Endothelial cell of umbilical vein (primary cell): ENCODE measurements at regions of chr9 and their contacts with region 1.

Region 1: GRCh38 chr9:81689343-81690190 is at the start of gene TLE1:
- DNase-seq: peak; percentile 100
- H3K4me3 ChIP-seq: peak within 1 kb of the TSS; percentile 78 to 96 (median 88)
- H3K27ac ChIP-seq: peak within 1 kb of the TSS; percentile 67
- H3K4me1 ChIP-seq: peaks cover 28% of the 10 kb centered on the region
- H3K27me3 ChIP-seq: peaks cover 3 to 5% of the 10 kb centered on the region in 2 experiments
- CTCF ChIP-seq: no peak
- POLR2A ChIP-seq: peak; percentile 31
- total RNA-seq, gene TLE1: 58.2 and 60.8 TPM in 2 replicates

Region 2: DNA sequence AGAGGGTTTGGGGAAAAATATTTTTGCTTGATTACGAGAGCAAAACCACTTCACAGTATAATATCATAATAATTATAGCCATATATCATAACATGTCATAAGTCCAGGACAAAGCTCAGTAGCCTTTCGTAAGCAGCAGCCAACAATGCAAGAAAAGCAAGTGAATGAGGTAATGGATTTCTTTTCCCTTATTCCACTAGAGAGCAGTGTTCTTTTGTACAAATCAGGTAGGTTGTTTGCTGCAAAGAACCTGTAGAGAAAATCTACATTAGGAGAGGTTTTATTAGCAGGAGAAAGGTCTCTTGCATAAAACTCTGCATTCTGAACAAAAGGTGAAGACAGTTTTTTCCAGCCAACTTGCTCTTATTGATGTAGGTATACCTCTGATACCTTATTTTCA is 1084.4 kb before region 1 on chr9:
- CTCF ChIA-PET with region 1: no interaction called
- POLR2A ChIA-PET with region 1: no interaction called
- dilution Hi-C with region 1: no loop called
- intact Hi-C with region 1: loop called (anchors 10 kb)
- DNase-seq: peak; percentile 2
- H3K4me3 ChIP-seq: no peak overlapping the region
- H3K27ac ChIP-seq: no peak overlapping the region
- H3K4me1 ChIP-seq: no peaks in the 10 kb centered on the region
- H3K27me3 ChIP-seq: no peaks in the 10 kb centered on the region
- CTCF ChIP-seq: no peak
- POLR2A ChIP-seq: no peak

Region 3: GRCh38 chr9:81389569-81389993 is 300.0 kb before region 1 on chr9:
- CTCF ChIA-PET with region 1: no interaction called
- POLR2A ChIA-PET with region 1: no interaction called
- dilution Hi-C with region 1: no loop called
- intact Hi-C with region 1: loop called (anchors 1 kb)
- DNase-seq: peak; percentile 98
- H3K4me3 ChIP-seq: no peak overlapping the region
- H3K27ac ChIP-seq: peak overlapping the region; percentile 100
- H3K4me1 ChIP-seq: peaks cover 31% of the 10 kb centered on the region
- H3K27me3 ChIP-seq: no peaks in the 10 kb centered on the region
- CTCF ChIP-seq: no peak
- POLR2A ChIP-seq: peak; percentile 60

Region 4: GRCh38 chr9:81540142-81540710 is 149.3 kb before region 1 on chr9:
- CTCF ChIA-PET with region 1: no interaction called
- POLR2A ChIA-PET with region 1: no interaction called
- dilution Hi-C with region 1: no loop called
- intact Hi-C with region 1: loop called (anchors 5 kb)
- DNase-seq: no peak
- H3K4me3 ChIP-seq: no peak overlapping the region
- H3K27ac ChIP-seq: no peak overlapping the region
- H3K4me1 ChIP-seq: peaks cover 8% of the 10 kb centered on the region
- H3K27me3 ChIP-seq: no peaks in the 10 kb centered on the region
- CTCF ChIP-seq: no peak
- POLR2A ChIP-seq: no peak

Region 5: DNA sequence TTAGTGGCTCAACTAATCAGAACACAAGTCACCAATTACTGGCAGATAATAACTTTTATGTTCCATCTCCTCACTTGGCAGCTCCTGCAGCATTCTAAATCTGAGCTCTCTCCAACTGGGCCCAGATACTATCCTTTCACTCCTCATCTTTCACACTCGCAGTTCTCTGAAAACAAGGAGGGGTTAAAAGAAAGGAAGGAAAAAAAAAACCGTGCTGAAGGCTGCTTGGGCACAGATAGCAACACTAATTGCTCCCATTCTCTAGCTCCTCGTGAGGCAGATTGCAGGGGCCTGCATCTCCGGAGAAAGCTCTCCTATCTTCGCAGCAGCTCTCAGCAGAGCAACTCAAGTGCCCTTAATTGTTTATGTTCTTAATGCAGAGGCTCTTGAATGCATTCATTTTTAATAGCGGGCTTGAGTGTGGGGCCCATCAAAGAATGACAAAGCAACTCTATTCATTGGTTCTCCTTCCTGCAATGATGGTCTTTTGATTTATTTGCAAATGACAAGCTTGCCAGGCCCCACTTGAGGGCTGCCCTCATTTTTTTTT is 24.2 kb before region 1 on chr9:
- CTCF ChIA-PET with region 1: no interaction called
- POLR2A ChIA-PET with region 1: no interaction called
- dilution Hi-C with region 1: no loop called
- intact Hi-C with region 1: no loop called
- DNase-seq: no peak
- H3K4me3 ChIP-seq: no peak overlapping the region
- H3K27ac ChIP-seq: no peak overlapping the region
- H3K4me1 ChIP-seq: no peaks in the 10 kb centered on the region
- H3K27me3 ChIP-seq: no peaks in the 10 kb centered on the region
- CTCF ChIP-seq: no peak
- POLR2A ChIP-seq: no peak

Region 6: GRCh38 chr9:81724242-81724889 is 34.8 kb after region 1 on chr9:
- CTCF ChIA-PET with region 1: interaction called, 4 read pairs
- POLR2A ChIA-PET with region 1: no interaction called
- dilution Hi-C with region 1: no loop called
- intact Hi-C with region 1: loop called (anchors 2 kb)
- DNase-seq: peak; percentile 89
- H3K4me3 ChIP-seq: no peak overlapping the region
- H3K27ac ChIP-seq: peak overlapping the region; percentile 21
- H3K4me1 ChIP-seq: peaks cover 8% of the 10 kb centered on the region
- H3K27me3 ChIP-seq: no peaks in the 10 kb centered on the region
- CTCF ChIP-seq: no peak
- POLR2A ChIP-seq: no peak

Region 7: DNA sequence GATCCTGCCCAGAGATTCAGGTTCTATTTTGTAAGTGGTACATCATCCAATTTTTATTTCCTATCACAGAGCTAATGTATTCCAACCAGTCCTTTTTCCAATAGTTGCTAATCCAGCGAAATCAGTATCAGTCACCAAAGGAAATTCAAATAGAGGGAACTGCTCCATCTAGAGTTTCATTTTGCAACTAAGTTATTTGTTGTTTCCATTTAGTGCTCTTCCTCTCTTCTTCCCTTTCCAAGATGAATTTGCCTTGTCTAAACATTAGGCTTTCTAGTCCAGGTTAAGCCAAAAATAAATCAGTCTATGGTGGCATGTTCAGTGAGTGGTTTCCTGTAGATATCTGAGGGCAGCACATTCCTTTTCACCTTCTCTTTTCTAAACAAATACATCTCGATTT is 158.9 kb after region 1 on chr9:
- CTCF ChIA-PET with region 1: interaction called, 47 read pairs
- POLR2A ChIA-PET with region 1: interaction called, 3 read pairs
- dilution Hi-C with region 1: no loop called
- intact Hi-C with region 1: loop called (anchors 1 kb)
- DNase-seq: peak; percentile 96
- H3K4me3 ChIP-seq: no peak overlapping the region
- H3K27ac ChIP-seq: peak overlapping the region; percentile 69
- H3K4me1 ChIP-seq: peaks cover 46% of the 10 kb centered on the region
- H3K27me3 ChIP-seq: no peaks in the 10 kb centered on the region
- CTCF ChIP-seq: peak; percentile 14 to 29
- POLR2A ChIP-seq: no peak

Region 8: GRCh38 chr9:82882138-82882537 is 1192.6 kb after region 1 on chr9:
- CTCF ChIA-PET with region 1: no interaction called
- POLR2A ChIA-PET with region 1: no interaction called
- dilution Hi-C with region 1: no loop called
- intact Hi-C with region 1: loop called (anchors 2 kb)
- DNase-seq: peak; percentile 24
- H3K4me3 ChIP-seq: no peak overlapping the region
- H3K27ac ChIP-seq: peak overlapping the region; percentile 64
- H3K4me1 ChIP-seq: peaks cover 24% of the 10 kb centered on the region
- H3K27me3 ChIP-seq: no peaks in the 10 kb centered on the region
- CTCF ChIP-seq: no peak
- POLR2A ChIP-seq: no peak